Endothelial cell of umbilical vein (primary cell): ENCODE measurements at regions of chr3 and their contacts with region 1.

Region 1: GRCh38 chr3:150371741-150372254 is 36.3 kb upstream of the TSC22D2 start:
- DNase-seq: peak; percentile 100
- H3K4me3 ChIP-seq: peak overlapping the region; percentile 7 to 91 (median 19)
- H3K27ac ChIP-seq: peak overlapping the region; percentile 94
- H3K4me1 ChIP-seq: peaks cover 39% of the 10 kb centered on the region
- H3K27me3 ChIP-seq: no peaks in the 10 kb centered on the region
- CTCF ChIP-seq: no peak
- POLR2A ChIP-seq: peak; percentile 86

Region 2: DNA sequence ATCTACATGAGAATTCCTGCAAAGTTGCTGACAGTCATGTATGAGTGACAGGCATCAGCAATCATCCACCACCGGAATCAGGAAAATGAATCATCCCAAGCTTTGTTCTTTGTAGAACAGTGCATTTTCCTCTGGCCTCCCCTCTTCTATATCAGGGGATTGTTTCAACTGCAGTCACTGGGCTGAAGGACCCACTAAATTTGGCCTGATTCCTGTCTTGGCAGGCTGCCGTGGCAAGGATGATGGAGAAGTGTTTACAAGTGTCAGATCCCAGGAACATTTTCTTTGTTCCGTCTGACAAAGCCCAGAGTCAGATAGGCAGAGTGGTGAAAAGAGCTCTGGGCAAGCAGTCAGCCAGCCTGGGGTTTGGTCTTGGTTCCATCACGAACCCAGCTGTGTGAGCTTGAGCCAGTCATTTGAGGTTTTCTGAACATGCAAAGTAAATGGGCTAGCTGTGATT is 138.8 kb before region 1 on chr3:
- CTCF ChIA-PET with region 1: interaction called, 3 read pairs
- POLR2A ChIA-PET with region 1: no interaction called
- dilution Hi-C with region 1: no loop called
- intact Hi-C with region 1: loop called (anchors 1 kb)
- DNase-seq: peak; percentile 95
- H3K4me3 ChIP-seq: no peak overlapping the region
- H3K27ac ChIP-seq: peak overlapping the region; percentile 76
- H3K4me1 ChIP-seq: peaks cover 33% of the 10 kb centered on the region
- H3K27me3 ChIP-seq: no peaks in the 10 kb centered on the region
- CTCF ChIP-seq: no peak
- POLR2A ChIP-seq: peak; percentile 21

Region 3: GRCh38 chr3:150286390-150287147 is 85.2 kb before region 1 on chr3:
- CTCF ChIA-PET with region 1: interaction called, 3 read pairs
- POLR2A ChIA-PET with region 1: no interaction called
- dilution Hi-C with region 1: no loop called
- intact Hi-C with region 1: loop called (anchors 1 kb)
- DNase-seq: peak; percentile 68
- H3K4me3 ChIP-seq: no peak overlapping the region
- H3K27ac ChIP-seq: no peak overlapping the region
- H3K4me1 ChIP-seq: no peaks in the 10 kb centered on the region
- H3K27me3 ChIP-seq: no peaks in the 10 kb centered on the region
- CTCF ChIP-seq: peak; percentile 41 to 55
- POLR2A ChIP-seq: no peak

Region 4: GRCh38 chr3:150348500-150348899 is 23.3 kb before region 1 on chr3:
- CTCF ChIA-PET with region 1: interaction called, 4 read pairs
- POLR2A ChIA-PET with region 1: no interaction called
- dilution Hi-C with region 1: no loop called
- intact Hi-C with region 1: loop called (anchors 1 kb)
- DNase-seq: peak; percentile 81
- H3K4me3 ChIP-seq: no peak overlapping the region
- H3K27ac ChIP-seq: peak overlapping the region; percentile 67
- H3K4me1 ChIP-seq: peaks cover 30% of the 10 kb centered on the region
- H3K27me3 ChIP-seq: no peaks in the 10 kb centered on the region
- CTCF ChIP-seq: no peak
- POLR2A ChIP-seq: no peak

Region 5: GRCh38 chr3:150449169-150449721 is 77.4 kb after region 1 on chr3:
- CTCF ChIA-PET with region 1: no interaction called
- POLR2A ChIA-PET with region 1: no interaction called
- dilution Hi-C with region 1: no loop called
- intact Hi-C with region 1: loop called (anchors 1 kb)
- DNase-seq: peak; percentile 87
- H3K4me3 ChIP-seq: peak overlapping the region in 1 of 3 experiments; percentile 30
- H3K27ac ChIP-seq: peak overlapping the region; percentile 84
- H3K4me1 ChIP-seq: peaks cover 54% of the 10 kb centered on the region
- H3K27me3 ChIP-seq: no peaks in the 10 kb centered on the region
- CTCF ChIP-seq: no peak
- POLR2A ChIP-seq: no peak

Region 6: DNA sequence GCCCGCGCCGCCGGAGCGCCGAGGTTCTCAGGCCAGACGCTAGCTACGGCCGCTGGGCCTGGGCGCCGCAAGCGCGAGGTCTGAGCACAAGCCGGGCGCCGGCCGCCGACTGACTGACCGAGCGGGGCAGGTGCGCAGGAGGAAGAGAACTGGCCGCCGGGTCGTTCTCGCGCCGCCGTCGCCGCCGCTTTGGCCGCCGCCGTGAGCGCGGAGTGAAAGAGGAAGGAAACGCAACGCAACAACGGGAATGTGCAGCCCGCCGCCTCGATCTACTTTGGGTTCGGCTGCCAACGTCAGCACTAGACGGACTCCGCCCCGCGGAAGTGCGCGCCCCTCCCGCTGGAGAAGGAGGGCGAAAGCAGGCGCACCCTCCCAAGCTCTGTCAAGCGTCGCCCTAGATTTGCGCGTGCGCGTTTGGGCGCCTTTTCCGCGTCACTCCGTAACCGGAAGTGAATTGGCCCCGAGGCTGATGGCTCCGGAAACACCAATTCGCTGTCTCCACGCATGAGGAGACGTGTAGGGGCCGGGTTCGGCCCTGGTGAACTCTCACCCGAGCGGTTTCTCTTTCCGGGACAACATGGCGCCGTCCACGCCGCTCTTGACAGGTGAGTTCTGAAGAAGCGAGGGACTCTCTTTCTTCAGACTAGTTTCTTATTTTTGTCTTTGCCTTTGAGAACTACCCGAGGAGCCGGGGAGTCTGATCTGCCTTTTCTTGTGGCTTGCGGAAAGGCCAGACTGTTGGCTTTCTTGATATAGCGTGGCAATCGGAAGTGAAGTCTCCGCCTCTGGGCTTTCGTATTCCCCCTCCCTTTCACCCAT is 174.6 kb after region 1 on chr3 and contains the starts of genes EIF2A and SERP1:
- CTCF ChIA-PET with region 1: no interaction called
- POLR2A ChIA-PET with region 1: no interaction called
- dilution Hi-C with region 1: no loop called
- intact Hi-C with region 1: loop called (anchors 2 kb)
- DNase-seq: peak; percentile 100
- H3K4me3 ChIP-seq: peak within 1 kb of the TSS; percentile 80 to 98 (median 93)
- H3K27ac ChIP-seq: peak within 1 kb of the TSS; percentile 97
- H3K4me1 ChIP-seq: peaks cover 25% of the 10 kb centered on the region
- H3K27me3 ChIP-seq: no peaks in the 10 kb centered on the region
- CTCF ChIP-seq: no peak
- POLR2A ChIP-seq: peak; percentile 85
- total RNA-seq, gene EIF2A: 97.6 and 104 TPM in 2 replicates
- total RNA-seq, gene SERP1: 81.7 and 82.0 TPM in 2 replicates